ENCODE measurements at regions of chrX and their contacts with region 1.

Region 1: DNA sequence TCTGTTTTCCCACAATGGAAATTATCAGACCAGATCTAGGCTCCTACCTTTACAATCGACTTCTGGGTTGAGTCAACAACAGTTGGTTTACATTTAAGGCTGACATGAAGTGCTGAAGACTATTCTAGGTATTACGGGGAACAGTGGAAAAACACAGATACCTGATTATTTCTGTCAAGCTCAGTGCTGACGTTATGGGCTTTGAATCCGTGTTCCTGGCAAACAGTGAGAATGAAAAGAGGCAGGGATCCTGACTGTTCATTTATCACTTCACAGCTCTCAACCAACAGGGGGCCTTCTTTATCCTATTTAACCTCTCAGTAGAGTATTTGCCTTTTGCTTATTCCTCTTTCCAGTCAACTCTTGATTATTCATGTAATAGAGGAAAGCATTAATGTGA is 43.1 kb downstream of the TMEM164 start:
- DNase-seq: no peak
- H3K4me3 ChIP-seq: no peak overlapping the region
- H3K27ac ChIP-seq: no peak overlapping the region
- H3K4me1 ChIP-seq: no peaks in the 10 kb centered on the region
- H3K27me3 ChIP-seq: no peaks in the 10 kb centered on the region
- CTCF ChIP-seq: no peak
- POLR2A ChIP-seq: no peak

Region 2: DNA sequence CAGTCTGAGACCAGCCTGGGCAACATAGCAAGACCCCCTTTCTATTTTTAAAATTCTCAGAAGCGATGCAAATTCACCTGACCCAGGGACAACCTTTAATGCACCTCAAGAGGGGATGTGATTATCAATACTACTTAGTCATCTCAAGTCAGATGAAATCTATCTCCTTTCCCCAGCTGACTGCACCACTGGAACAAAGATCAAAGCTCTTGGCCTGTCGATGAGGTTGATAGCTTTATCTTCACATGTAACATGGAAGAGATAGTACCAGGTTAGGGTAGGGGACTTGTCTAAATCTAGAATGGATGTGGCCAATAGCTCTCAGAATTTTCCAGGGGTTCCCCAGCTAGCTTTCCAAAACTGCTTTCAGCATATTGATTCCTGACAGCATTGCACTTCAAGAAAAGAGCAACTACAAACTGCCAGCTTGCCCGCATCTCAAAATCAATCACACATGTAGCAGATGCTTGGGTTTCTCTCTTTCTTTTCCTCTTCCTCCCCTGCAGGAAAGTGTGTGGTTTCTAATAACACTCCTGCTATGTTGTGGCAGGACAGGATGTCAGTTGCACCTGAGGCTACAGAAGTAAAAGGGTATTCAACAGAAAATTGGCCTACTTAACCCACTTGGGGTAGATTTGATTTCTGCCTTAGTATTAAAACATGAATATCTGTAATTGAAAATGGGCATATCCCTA is 55.3 kb before region 1 on chrX:
- CTCF ChIA-PET with region 1: no interaction called
- POLR2A ChIA-PET with region 1: no interaction called
- dilution Hi-C with region 1: no loop called
- intact Hi-C with region 1: no loop called
- DNase-seq: no peak
- H3K4me3 ChIP-seq: no peak overlapping the region
- H3K27ac ChIP-seq: no peak overlapping the region
- H3K4me1 ChIP-seq: peaks cover 6% of the 10 kb centered on the region
- H3K27me3 ChIP-seq: no peaks in the 10 kb centered on the region
- CTCF ChIP-seq: no peak
- POLR2A ChIP-seq: no peak

Region 3: DNA sequence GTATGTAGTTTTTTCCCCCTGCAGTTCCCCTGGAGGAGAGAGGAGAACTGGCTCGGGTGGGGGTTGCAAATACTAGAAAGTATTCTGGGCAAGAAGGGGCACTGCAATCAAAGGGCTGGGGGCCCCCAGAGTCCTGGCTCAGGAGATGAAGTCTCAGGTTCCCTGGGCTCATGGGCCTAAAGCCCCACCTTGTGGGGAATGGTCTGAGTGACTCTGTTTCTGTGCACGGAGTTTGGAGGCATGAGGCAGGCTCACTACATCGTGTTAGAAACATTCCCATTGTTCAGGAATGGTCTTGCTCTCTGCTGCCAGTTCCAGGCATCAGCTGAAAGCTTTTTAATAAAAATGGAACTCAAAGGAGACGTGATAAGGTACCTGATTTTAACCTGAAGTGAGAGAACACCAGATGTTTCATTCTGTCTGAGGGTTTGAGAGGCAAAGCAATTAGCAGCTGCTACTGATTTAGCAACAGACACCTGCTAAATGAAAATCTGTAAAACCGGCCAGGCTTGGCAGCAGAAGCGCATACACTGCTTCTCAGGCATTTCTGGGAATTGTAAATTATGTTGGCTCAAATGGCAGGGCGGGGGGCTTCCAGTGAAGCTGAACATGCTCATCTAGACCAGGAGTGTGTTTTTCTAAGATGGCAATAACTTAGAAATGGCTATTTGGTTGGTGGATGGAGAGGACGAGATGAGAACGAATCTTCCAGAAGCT is 79.6 kb after region 1 on chrX:
- CTCF ChIA-PET with region 1: interaction called, 10 read pairs
- POLR2A ChIA-PET with region 1: no interaction called
- dilution Hi-C with region 1: no loop called
- intact Hi-C with region 1: no loop called
- DNase-seq: peak; percentile 15
- H3K4me3 ChIP-seq: no peak overlapping the region
- H3K27ac ChIP-seq: no peak overlapping the region
- H3K4me1 ChIP-seq: no peaks in the 10 kb centered on the region
- H3K27me3 ChIP-seq: no peaks in the 10 kb centered on the region
- CTCF ChIP-seq: peak in 1 of 2 donors; percentile 40
- POLR2A ChIP-seq: no peak

Region 4: GRCh38 chrX:110286136-110286535 is 240.1 kb after region 1 on chrX:
- CTCF ChIA-PET with region 1: no interaction called
- POLR2A ChIA-PET with region 1: no interaction called
- dilution Hi-C with region 1: no loop called
- intact Hi-C with region 1: no loop called
- DNase-seq: no peak
- H3K4me3 ChIP-seq: no peak overlapping the region
- H3K27ac ChIP-seq: no peak overlapping the region
- H3K4me1 ChIP-seq: peaks cover 5% of the 10 kb centered on the region
- H3K27me3 ChIP-seq: no peaks in the 10 kb centered on the region
- CTCF ChIP-seq: no peak
- POLR2A ChIP-seq: no peak

Measured in endothelial cell of umbilical vein (primary cell).